ENCODE measurements at regions of chr12 and their contacts with region 1.

Region 1: DNA sequence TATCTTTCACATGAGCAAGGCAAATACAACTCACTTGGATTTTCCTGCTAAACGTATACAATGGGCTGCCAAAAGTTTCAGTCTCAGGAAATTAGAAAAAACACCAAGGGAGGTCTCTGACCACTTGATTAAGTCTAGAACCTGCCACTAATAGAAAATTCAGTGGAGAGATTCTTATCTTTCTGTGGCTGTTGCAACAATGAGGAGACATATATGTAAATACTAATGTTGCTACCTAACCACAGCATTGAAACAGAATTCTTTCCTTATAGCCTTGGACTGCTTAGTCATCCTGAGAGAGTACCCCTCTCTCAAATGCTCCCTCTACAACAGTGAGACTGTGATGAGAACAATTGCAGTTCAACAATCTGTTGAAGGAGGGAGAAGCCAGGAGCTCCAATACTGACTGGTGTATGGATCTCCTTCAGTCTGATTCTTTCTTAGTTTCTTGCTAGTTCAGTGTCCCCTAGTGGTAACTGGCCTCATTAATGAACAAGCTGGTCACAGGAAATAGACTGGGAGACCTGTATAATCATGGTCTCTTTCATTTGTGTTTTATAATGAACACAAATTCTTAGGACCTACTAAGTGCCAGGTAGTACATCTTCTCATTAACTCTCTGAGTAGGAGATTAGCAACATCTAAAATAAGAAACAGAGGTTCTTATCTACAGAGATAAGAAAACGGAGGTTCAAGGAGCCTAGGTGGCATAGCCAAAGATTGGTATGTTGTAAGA is 164.5 kb downstream of the SLC38A4 start:
- DNase-seq: peak in 1 of 2 donors; percentile 50
- H3K4me3 ChIP-seq: no peak overlapping the region
- H3K27ac ChIP-seq: peak overlapping the region; percentile 71 to 80
- H3K4me1 ChIP-seq: peaks cover 0 to 32% of the 10 kb centered on the region in 2 donors
- H3K27me3 ChIP-seq: no peaks in the 10 kb centered on the region
- CTCF ChIP-seq: peak; percentile 75 to 85 (median 83)
- POLR2A ChIP-seq: no peak

Region 2: DNA sequence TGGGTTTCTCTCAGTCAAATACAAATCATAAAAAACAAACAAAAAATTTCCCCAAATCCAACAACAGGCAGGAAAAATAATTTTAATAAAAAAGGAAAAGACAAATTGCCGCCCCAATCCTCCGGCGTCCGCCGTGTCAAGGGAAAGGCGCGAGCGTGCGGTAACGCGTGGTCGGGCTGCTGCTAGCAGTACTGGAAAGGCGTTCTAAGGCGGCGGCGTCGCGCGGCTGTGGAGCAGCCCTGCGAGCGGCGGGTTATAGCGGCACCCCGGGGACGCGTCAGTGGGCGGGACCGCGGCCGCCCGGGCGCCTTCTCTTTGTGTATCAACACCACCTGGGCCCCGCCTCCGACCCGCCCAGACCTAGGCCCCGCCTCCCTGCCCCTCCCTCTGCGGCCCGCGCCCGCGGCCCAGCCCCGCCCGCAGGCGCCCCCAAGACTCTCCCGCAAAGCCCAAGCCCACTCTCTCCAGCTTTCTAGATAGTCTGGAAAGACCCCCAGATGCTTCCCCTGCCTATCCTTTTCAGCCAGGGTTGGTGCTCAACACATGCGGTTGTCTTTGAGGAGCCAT is 288.7 kb before region 1 on chr12 and contains the start of gene SLC38A2:
- intact Hi-C with region 1: loop called (anchors 10 kb)
- DNase-seq: peak; percentile 98
- H3K4me3 ChIP-seq: peak within 1 kb of the TSS; percentile 91 to 92
- H3K27ac ChIP-seq: peak within 1 kb of the TSS; percentile 98 to 100
- H3K4me1 ChIP-seq: peaks cover 0 to 3% of the 10 kb centered on the region in 2 donors
- H3K27me3 ChIP-seq: no peaks in the 10 kb centered on the region
- CTCF ChIP-seq: peak in 1 of 4 experiments; percentile 35
- POLR2A ChIP-seq: peak; percentile 96 to 99
- total RNA-seq, gene SLC38A2: 234 to 487 (median 372) TPM

Measured in uterus (tissue), 4 donors.